Activated CD4-positive, alpha-beta T cell treated with anti-CD3 and anti-CD28 coated beads for 36 hours (primary cell): ENCODE measurements at regions of chr1 and their contacts with region 1.

Region 1: DNA sequence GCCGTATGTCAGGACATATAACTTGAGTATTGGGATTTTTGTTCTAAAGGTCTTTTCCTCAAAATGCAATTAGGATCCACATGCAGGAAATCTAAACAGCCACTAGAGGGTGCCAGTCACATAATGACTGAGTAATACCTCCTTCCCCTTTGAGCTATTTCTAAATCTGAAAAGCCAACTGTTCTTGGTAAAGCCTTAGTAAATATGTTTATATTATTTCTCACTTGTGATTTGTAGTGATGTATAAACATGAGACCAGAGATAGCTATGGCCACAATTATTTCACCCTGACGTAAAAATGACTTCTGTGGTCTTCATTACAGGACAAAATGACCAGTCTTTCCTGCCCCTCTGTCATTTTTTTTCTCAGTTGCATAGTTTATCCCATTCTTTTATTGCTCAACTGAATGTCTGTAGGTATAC is 41.0 kb upstream of the DR1 start:
- DNase-seq: peak; percentile 43
- ATAC-seq: peak; percentile 44
- H3K4me3 Mint-ChIP-seq: no peak overlapping the region
- H3K27ac Mint-ChIP-seq: no peak overlapping the region
- H3K4me1 Mint-ChIP-seq: no peaks in the 10 kb centered on the region
- H3K27me3 Mint-ChIP-seq: no peaks in the 10 kb centered on the region

Region 2: DNA sequence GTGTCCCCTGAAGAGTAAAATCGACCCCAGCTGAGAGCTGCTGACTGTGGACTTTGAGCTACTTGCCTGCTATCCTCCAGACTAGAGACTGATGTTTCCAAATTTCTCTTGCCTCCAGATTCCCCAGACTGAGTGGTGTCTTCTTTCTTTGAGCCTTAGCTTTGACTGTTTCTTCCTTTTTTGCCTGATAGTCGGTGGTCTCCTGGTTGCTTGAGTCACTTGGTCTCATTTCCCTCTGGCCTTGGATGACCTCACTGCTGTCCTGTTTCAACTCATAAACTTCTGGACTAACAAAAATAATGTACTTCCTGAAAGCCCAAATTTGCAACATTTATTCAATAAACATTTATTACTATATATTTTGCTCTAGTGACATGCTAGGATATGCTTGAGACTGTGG is 290.6 kb before region 1 on chr1:
- CTCF ChIA-PET with region 1: no interaction called
- POLR2A ChIA-PET with region 1: no interaction called
- intact Hi-C with region 1: no loop called
- DNase-seq: no peak
- ATAC-seq: no peak
- H3K4me3 Mint-ChIP-seq: no peak overlapping the region
- H3K27ac Mint-ChIP-seq: no peak overlapping the region
- H3K4me1 Mint-ChIP-seq: no peaks in the 10 kb centered on the region
- H3K27me3 Mint-ChIP-seq: peaks cover 3% of the 10 kb centered on the region

Region 3: GRCh38 chr1:93078986-93079654 is 225.6 kb before region 1 on chr1 and contains the start of gene MTF2:
- CTCF ChIA-PET with region 1: interaction called, 19 read pairs
- POLR2A ChIA-PET with region 1: no interaction called
- intact Hi-C with region 1: no loop called
- DNase-seq: peak; percentile 97
- ATAC-seq: peak; percentile 91
- H3K4me3 Mint-ChIP-seq: peak within 1 kb of the TSS; percentile 94
- H3K27ac Mint-ChIP-seq: peak within 1 kb of the TSS; percentile 94
- H3K4me1 Mint-ChIP-seq: peaks cover 29% of the 10 kb centered on the region
- H3K27me3 Mint-ChIP-seq: no peaks in the 10 kb centered on the region
- total RNA-seq, gene MTF2: 49.8 to 55.0 TPM

Region 4: GRCh38 chr1:93338421-93338820 is 33.7 kb after region 1 on chr1:
- CTCF ChIA-PET with region 1: interaction called, 23 read pairs
- POLR2A ChIA-PET with region 1: no interaction called
- intact Hi-C with region 1: no loop called
- DNase-seq: no peak
- ATAC-seq: no peak
- H3K4me3 Mint-ChIP-seq: no peak overlapping the region
- H3K27ac Mint-ChIP-seq: no peak overlapping the region
- H3K4me1 Mint-ChIP-seq: peaks cover 37% of the 10 kb centered on the region
- H3K27me3 Mint-ChIP-seq: no peaks in the 10 kb centered on the region

Region 5: GRCh38 chr1:93414749-93415148 is 110.0 kb after region 1 on chr1:
- CTCF ChIA-PET with region 1: no interaction called
- POLR2A ChIA-PET with region 1: no interaction called
- intact Hi-C with region 1: loop called in 1 of 2 experiments (anchors 5 kb)
- DNase-seq: no peak
- ATAC-seq: no peak
- H3K4me3 Mint-ChIP-seq: no peak overlapping the region
- H3K27ac Mint-ChIP-seq: no peak overlapping the region
- H3K4me1 Mint-ChIP-seq: no peaks in the 10 kb centered on the region
- H3K27me3 Mint-ChIP-seq: no peaks in the 10 kb centered on the region

Region 6: DNA sequence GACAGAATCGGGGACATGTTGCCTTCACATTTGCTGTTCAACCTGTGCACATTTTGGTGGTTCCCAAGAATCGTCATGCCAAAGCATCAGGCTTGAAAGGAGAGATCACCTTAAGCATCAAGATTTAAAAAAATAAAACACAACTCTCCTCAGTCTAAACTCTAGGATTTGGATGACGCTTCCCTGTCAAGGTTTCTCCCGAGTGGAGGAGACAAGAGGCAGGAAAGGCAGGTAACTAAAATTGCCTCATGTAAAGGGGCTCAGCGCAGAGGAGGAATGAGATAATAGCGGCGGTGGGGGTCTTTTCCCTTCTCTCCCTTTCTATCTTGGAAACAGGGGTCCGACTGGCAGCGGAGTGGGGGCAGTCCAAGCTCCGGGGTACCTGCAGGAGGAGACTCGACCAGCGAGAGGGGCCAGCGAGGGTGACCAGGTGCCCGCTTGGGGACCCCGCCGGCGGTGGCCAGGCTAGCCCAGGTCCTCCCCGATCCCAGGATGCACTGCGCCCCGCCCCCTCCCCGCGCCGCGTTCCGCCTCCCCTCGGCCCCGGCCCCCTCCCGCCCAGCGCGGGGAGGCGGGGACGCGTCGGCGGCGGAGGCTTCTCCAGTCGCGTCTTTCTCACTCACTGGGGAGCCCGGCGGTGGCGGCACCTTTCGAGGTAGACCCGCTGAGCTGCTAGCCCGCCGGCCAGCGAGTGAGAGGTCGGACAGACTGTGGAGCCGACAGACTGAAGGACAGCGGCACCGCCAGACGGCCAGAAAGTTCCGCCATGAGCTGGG is 143.0 kb after region 1 on chr1 and contains the start of gene FNBP1L:
- CTCF ChIA-PET with region 1: interaction called, 13 read pairs
- POLR2A ChIA-PET with region 1: no interaction called
- intact Hi-C with region 1: loop called in 1 of 2 experiments (anchors 10 kb)
- DNase-seq: peak; percentile 81
- ATAC-seq: peak; percentile 87
- H3K4me3 Mint-ChIP-seq: peak within 1 kb of the TSS; percentile 83
- H3K27ac Mint-ChIP-seq: peak within 1 kb of the TSS; percentile 72
- H3K4me1 Mint-ChIP-seq: peaks cover 15% of the 10 kb centered on the region
- H3K27me3 Mint-ChIP-seq: peaks cover 24% of the 10 kb centered on the region
- total RNA-seq, gene FNBP1L: 1.2 to 1.4 TPM

Region 7: DNA sequence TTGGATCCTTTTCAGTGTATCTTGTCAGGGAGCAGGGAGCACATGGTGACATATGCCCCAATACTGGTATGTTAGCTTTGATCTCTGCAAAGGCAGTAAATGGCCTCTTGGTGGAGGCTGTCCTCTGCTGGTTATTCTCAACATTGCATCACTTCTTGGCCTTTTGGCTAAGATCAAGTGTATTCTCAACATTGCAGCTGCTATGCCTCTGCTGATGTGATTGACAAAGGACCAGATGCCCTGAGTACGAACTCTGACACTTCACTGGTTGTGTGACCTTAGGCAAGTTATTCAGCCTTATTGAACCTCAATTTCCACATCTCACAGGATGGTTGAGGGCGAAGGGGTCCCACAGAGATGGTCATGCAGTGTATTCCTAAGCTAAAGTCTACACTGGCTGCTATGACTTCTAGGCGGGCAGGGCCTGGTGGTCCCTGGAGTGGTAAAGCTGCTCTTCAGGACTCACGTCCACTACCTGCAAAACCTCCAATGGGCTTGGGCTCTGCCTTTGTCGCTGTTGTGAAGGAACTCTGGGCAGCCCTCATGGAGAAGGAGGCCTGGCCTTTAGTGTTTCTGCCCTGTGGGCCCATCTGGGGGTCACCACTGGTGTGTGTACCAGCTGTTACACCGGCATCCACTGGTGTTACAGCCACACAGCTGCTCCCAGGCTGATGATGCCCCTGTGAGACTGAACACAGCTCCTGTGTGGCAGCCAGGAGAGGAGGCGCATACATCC is 509.5 kb after region 1 on chr1:
- CTCF ChIA-PET with region 1: interaction called, 5 read pairs
- POLR2A ChIA-PET with region 1: no interaction called
- intact Hi-C with region 1: loop called in 1 of 2 experiments (anchors 10 kb)
- DNase-seq: peak; percentile 67
- ATAC-seq: peak; percentile 45
- H3K4me3 Mint-ChIP-seq: no peak overlapping the region
- H3K27ac Mint-ChIP-seq: no peak overlapping the region
- H3K4me1 Mint-ChIP-seq: peaks cover 21% of the 10 kb centered on the region
- H3K27me3 Mint-ChIP-seq: no peaks in the 10 kb centered on the region